PC-3 (cell line): ENCODE measurements at regions of chr3 and their contacts with region 1.

Region 1: GRCh38 chr3:36852071-36852470 is 87.7 kb upstream of the DCLK3 start:
- DNase-seq: no peak
- ATAC-seq: no peak
- H3K4me3 ChIP-seq: no peak overlapping the region
- H3K27ac ChIP-seq: no peak overlapping the region
- H3K4me1 ChIP-seq: no peaks in the 10 kb centered on the region
- H3K27me3 ChIP-seq: no peaks in the 10 kb centered on the region
- CTCF ChIP-seq: no peak

Region 2: GRCh38 chr3:36891701-36892160 is 39.7 kb after region 1 on chr3:
- CTCF ChIA-PET with region 1: interaction called, 12 read pairs
- POLR2A ChIA-PET with region 1: no interaction called
- intact Hi-C with region 1: no loop called
- DNase-seq: no peak
- ATAC-seq: no peak
- H3K4me3 ChIP-seq: no peak overlapping the region
- H3K27ac ChIP-seq: no peak overlapping the region
- H3K4me1 ChIP-seq: no peaks in the 10 kb centered on the region
- H3K27me3 ChIP-seq: no peaks in the 10 kb centered on the region
- CTCF ChIP-seq: no peak